ENCODE measurements at regions of chr12 and their contacts with region 1.

Region 1: DNA sequence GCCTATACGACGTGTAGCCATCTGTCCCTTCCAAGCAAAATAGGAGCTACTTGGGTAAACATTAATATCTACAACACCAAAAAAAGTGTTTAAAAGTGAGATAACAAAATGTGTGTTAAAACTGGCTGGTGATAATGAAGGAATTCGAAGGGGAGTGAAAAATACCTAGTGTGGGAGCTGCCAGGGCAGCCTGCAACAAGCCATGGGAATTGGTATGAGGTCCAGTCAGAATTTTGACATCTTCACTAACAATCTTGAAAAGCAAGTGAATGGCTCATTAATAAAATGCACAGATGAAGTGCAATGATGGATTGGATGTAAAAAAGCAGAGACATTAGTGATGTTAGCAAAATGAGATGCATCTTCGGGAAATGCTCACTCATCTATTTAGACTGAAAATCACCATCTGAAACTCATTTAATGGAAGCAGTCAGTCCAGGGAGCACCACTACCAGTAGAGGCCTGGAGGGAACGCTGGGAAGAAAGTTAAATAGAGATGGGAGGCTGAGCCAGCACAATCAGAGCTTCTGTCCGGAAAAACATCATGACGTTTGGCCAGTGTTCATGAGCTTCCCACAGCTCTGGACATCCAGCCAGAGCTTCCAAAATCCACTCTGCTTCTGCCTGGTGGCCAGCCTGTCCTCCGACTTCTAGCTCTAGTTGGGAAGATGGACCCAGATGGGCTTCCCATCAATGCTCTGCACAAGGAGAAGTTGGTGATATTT is 405.0 kb upstream of the TMTC1 start:
- DNase-seq: no peak
- H3K4me3 ChIP-seq: no peak overlapping the region
- H3K27ac ChIP-seq: no peak overlapping the region
- H3K4me1 ChIP-seq: no peaks in the 10 kb centered on the region
- H3K27me3 ChIP-seq: no peaks in the 10 kb centered on the region
- CTCF ChIP-seq: no peak

Region 2: GRCh38 chr12:30138483-30138882 is 50.3 kb before region 1 on chr12:
- intact Hi-C with region 1: loop called (anchors 2 kb)
- DNase-seq: no peak
- H3K4me3 ChIP-seq: no peak overlapping the region
- H3K27ac ChIP-seq: no peak overlapping the region
- H3K4me1 ChIP-seq: no peaks in the 10 kb centered on the region
- H3K27me3 ChIP-seq: no peaks in the 10 kb centered on the region
- CTCF ChIP-seq: no peak

Region 3: DNA sequence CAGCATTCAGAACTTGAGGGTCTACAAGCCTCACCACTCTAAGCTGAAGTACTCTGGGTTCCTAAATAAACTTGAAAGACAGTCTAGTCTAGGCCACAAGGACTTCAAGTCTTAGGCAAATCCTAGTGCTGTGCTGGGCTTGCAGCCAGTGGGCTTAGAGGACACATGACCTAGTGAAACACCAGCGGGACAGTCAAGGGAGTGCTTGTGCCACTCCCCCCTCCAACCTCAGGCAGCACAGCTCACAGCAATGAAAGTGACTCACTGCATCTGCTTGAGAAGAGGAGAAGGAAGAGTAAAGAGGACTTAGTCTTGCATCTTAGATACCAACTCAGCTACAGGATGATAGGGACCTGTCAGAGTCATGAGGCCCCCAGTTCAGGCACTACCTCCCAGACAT is 68.9 kb after region 1 on chr12:
- intact Hi-C with region 1: no loop called
- DNase-seq: no peak
- H3K4me3 ChIP-seq: no peak overlapping the region
- H3K27ac ChIP-seq: no peak overlapping the region
- H3K4me1 ChIP-seq: no peaks in the 10 kb centered on the region
- H3K27me3 ChIP-seq: no peaks in the 10 kb centered on the region
- CTCF ChIP-seq: no peak

Measured in left ventricle myocardium inferior (tissue), 1 donor.